ENCODE measurements at regions of chr16 and their contacts with region 1.

Region 1: GRCh38 chr16:352547-353403 is at the start of gene AXIN1:
- DNase-seq: peak; percentile 99
- H3K4me3 Mint-ChIP-seq: peak within 1 kb of the TSS; percentile 85
- H3K27ac Mint-ChIP-seq: peak within 1 kb of the TSS; percentile 85
- H3K4me1 Mint-ChIP-seq: peaks cover 25% of the 10 kb centered on the region
- H3K27me3 Mint-ChIP-seq: no peaks in the 10 kb centered on the region
- total RNA-seq, gene AXIN1: 26.7 and 27.9 TPM in 2 replicates

Region 2: DNA sequence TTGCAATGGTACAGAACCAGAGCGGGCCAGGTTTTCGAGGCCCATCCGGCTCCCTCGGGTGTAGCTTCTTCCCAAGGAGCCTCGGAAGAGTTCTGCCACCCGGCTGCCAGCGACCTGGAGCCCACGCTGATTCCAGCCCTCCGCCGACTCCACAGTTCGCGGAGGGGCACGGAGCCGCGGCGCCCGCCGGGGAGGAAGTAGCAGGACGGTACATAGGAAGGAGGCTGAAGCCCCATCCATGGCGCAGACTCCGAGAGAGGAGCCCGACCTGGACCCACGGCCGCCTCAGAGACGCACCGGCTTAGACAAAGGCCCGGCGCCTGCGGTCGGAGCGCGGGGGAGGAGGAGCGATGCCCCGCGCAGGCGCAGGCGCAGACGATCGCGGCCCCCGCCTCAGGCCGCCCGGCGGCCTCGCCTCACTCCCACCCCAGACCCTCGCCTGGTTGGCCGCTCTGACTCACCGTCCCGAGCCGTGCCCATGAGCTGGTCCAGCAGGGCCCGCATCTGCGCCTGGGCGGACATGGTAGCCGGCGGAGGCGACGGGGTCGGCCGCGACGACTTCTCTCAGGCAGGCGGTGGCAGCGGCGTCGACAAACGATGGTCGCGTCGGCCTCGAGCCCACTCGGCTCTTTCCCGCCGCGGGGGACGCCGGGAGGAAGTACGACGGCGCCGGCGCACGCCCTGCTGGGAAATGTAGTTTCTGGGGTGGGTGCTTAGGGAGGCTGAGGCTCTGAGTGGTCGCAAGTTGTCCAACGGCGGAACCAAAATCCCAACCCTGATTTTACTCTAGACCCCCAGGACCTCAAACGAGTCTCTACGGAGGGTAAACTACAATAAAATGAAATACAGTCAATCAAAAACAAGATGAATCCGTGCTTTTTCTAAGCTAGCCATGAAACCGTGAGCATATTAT is 123.7 kb before region 1 on chr16 and contains the start of gene LUC7L:
- intact Hi-C with region 1: loop called (anchors 1 kb)
- DNase-seq: peak; percentile 96
- H3K4me3 Mint-ChIP-seq: peak within 1 kb of the TSS; percentile 92
- H3K27ac Mint-ChIP-seq: peak within 1 kb of the TSS; percentile 94
- H3K4me1 Mint-ChIP-seq: peaks cover 21% of the 10 kb centered on the region
- H3K27me3 Mint-ChIP-seq: no peaks in the 10 kb centered on the region
- total RNA-seq, gene LUC7L: 82.3 and 87.9 TPM in 2 replicates

Region 3: DNA sequence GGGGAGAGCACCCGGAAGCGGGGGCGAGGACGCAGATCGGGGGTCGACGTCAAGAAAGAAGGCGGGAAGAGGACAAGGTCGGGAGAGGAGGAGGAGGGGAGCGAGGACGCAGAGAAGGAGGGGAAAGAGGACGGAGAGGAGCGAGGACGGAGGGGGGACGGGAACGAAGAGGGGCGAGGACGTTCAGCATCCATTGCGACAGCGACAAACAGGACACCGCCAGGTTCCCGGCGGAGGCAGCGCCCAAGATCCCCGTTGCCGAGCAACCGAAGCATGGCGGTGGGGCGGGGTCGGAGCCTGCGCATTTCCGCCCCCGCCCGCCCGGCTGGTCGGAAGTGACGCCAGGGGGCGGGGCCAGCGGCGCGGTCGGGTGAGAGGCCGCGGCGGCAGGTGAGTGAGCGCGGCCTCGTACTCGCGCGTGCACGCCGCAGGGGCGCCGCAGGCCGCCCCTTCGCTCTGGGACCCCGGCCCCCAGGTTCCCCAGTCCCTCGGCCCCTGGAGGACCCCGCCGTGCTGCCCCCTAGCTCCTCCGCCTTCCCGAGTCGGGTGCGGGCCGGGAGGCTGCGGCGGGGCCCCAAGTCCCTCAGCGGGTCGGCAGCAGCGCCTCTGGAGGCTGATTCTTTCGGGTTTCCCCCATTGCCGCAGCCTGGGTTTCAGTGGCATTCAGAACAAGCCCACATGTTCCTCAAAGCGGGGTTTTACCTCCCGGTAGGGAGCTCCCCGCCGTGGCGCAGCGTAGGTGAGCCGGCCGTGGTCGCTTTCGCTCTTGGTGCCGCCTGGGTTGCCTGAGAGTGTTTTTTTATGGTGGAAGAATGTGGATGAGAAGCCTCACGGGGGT is 118.1 kb before region 1 on chr16 and contains the start of gene FAM234A:
- intact Hi-C with region 1: loop called (anchors 1 kb)
- DNase-seq: peak; percentile 98
- H3K4me3 Mint-ChIP-seq: peak within 1 kb of the TSS; percentile 99
- H3K27ac Mint-ChIP-seq: peak within 1 kb of the TSS; percentile 99
- H3K4me1 Mint-ChIP-seq: peaks cover 18% of the 10 kb centered on the region
- H3K27me3 Mint-ChIP-seq: peaks cover under 1% of the 10 kb centered on the region
- total RNA-seq, gene FAM234A: 17.3 and 18.6 TPM in 2 replicates

Region 4: DNA sequence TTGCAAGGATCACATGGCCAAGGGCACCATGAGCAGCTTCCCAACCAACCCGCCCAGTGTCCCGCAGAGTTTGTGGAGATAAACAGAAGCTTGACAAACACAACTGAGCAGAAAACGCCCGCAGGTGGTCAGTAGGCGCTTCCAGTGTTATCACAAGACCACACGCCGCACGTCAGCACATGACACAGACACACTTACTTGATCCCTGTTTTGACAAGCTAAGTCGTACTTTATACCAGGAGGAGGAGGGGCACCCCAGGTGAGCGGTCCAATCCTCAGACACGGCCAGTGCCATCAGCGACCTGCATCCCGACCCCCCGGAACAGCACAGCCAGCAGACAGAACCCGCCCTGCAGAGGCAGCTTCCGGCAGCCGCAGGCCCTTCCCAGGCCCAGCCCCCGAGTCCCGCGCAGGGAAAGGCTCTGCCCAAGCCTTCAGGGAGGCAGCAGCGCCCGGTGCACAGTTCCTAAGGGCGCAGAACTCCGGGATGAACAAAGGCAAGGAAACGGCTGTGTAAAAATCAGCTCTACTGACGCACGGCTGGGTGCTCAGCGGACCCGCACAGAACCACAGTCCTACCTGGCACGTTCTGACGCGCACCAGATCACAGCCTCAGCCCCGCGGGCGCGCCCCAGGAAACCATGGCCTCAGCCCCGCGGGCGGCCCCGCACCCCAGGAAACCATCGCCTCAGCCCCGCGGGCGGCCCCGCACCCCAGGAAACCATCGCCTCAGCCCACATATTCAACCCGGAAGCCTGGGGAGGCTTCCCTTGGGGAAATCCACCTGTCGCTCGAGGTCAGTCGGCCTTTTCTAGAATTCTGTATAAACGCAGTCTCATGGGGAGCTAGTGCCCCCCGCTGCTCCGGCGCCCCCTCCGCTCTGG is 28.1 kb before region 1 on chr16:
- intact Hi-C with region 1: loop called (anchors 2 kb)
- DNase-seq: peak; percentile 92
- H3K4me3 Mint-ChIP-seq: peak overlapping the region; percentile 71
- H3K27ac Mint-ChIP-seq: peak overlapping the region; percentile 63
- H3K4me1 Mint-ChIP-seq: peaks cover 33% of the 10 kb centered on the region
- H3K27me3 Mint-ChIP-seq: no peaks in the 10 kb centered on the region

Region 5: GRCh38 chr16:370443-370842 is 17.7 kb after region 1 on chr16 and contains the start of gene MRPL28:
- intact Hi-C with region 1: loop called (anchors 1 kb)
- DNase-seq: peak; percentile 98
- H3K4me3 Mint-ChIP-seq: peak within 1 kb of the TSS; percentile 96
- H3K27ac Mint-ChIP-seq: peak within 1 kb of the TSS; percentile 95
- H3K4me1 Mint-ChIP-seq: peaks cover 10% of the 10 kb centered on the region
- H3K27me3 Mint-ChIP-seq: no peaks in the 10 kb centered on the region
- total RNA-seq, gene MRPL28: 106 and 109 TPM in 2 replicates

Region 6: GRCh38 chr16:401468-402348 is 48.9 kb after region 1 on chr16 and contains the start of gene DECR2:
- intact Hi-C with region 1: no loop called
- DNase-seq: peak; percentile 98
- H3K4me3 Mint-ChIP-seq: peak within 1 kb of the TSS; percentile 84
- H3K27ac Mint-ChIP-seq: peak within 1 kb of the TSS; percentile 84
- H3K4me1 Mint-ChIP-seq: peaks cover 11% of the 10 kb centered on the region
- H3K27me3 Mint-ChIP-seq: peaks cover 1% of the 10 kb centered on the region
- total RNA-seq, gene DECR2: 17.6 and 18.5 TPM in 2 replicates

Region 7: DNA sequence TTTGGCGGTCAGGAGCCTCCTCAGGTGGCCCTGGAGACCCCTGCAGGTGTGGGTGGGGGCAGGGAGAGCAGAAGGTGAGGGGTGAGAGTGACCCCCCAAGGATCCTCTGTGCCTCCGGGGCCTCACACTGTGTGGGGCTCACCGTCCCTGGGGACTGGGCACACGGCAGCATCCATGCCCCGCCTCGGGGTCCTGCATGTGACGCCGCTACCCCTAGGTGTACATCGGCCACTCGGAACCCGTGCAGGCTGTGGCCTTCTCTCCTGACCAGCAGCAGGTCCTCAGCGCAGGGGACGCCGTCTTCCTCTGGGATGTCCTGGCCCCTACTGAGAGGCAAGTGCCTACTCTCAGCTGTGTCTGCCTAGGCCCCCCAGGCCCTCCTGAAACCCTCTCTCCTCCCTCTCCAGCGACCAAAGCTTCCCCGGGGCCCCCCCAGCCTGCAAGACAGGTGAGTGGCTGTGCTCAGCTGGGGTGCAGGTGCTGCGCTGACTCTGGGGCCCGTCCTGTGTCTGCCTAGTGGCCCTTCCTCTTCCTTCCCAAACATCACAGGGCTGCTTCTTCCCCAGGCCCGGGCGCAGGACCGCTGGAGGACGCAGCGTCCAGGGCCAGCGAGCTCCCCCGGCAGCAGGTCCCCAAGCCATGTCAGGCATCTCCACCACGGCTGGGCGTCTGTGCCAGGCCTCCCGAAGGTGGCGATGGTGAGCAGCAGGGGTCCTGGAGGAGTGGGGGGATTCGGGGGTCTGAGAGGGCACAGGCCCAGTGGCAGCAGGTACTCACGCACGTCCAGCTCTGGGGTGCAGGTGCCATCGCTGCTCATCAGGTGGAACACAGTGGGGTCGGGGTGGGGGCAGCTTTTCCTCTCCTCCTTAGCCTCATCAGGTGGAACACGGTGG is 306.1 kb after region 1 on chr16:
- intact Hi-C with region 1: no loop called
- DNase-seq: no peak
- H3K4me3 Mint-ChIP-seq: no peak overlapping the region
- H3K27ac Mint-ChIP-seq: no peak overlapping the region
- H3K4me1 Mint-ChIP-seq: peaks cover 4% of the 10 kb centered on the region
- H3K27me3 Mint-ChIP-seq: no peaks in the 10 kb centered on the region

Measured in activated CD4-positive, alpha-beta T cell treated with anti-CD3 and anti-CD28 coated beads, Interleukin-2, amount 10 ng/mL, durations not matched to agents 24 days and 14 days (primary cell).